Calu3 (cell line): ENCODE measurements at regions of chr3 and their contacts with region 1.

Region 1: DNA sequence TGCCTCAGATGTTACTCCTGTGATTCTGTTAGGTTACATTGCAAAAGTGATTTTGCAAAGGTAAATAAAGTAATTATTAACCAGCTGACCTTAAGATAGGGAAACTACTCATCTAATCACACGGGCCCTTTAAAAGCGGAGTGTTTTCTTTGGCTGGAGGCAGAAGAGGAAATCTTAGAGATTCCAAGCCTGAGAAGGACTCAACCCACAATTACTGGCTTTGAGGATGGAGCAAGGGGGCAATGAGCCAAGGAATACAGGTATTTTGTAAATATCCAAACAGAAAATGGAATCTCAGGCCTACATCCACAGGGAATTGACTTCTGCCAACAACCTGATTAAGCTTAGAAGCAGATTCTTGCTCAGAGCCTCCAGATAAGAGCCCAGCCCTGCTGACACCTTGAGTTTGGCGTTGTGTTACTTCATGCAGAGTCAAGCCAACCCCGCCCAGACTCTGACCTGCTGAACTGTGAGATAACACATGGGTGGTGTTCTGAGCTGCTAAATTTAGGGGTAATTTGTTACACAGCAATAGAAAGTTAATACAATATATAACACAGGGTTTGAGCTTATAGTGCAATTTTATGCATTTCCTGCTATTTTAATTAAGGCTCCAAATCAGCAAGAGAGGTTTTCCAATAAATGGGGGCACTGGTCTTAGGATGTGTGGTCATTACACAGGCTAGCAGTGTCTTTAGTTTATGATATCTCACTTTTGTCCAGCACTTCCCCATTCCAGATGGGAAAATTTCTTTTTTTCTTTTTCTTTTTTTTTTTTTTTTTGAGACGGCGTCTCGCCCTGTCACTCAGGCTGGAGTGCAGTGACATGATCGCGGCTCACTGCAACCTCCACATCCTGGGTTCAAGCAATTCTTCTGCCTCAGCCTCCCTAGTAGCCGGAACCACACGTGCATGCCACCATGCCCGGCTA is 19.5 kb downstream of the NFKBIZ start:
- DNase-seq: peak; percentile 50
- H3K4me3 Mint-ChIP-seq: peak overlapping the region; percentile 28
- H3K27ac Mint-ChIP-seq: peak overlapping the region; percentile 95
- H3K4me1 Mint-ChIP-seq: peaks cover 51% of the 10 kb centered on the region
- H3K27me3 Mint-ChIP-seq: no peaks in the 10 kb centered on the region
- CTCF ChIP-seq: no peak

Region 2: DNA sequence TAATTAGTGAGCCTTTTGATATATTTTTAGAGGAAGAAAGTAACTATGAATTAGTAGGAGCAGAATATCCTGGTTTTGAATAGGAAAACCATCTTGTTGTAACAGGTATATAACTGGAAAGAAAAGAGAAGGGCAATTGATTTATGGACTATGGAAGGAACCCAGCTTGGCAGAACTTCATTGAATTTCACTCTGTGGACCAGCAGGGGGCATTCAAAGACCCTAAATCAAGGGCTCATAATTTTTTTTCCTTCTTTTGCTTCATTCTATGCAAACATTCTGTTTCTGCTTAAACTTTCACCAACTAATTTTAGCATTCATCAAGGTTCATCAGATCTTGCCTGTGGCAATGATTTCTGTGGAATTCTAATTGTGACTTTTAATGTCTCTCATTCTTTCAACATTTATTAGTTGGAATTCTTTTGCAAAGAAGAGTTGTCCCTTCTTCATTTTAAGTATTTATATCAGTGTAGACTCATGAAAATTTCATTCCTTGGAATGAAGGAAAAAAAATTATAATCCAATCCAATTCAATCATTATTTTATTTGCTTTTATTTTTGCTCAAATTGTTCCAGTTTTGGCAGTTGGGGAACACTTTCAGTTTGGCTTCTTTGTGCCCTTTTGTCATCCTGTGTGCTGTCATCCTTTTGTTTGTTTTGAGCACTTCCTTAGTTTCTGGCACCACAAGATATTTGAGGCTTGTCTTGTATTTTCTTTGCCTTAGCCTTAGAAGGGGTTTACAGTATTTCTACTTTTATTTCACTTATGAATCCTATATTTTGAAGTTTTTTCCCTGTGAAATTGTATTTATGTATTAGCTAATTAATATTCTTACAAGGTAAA is 59.4 kb before region 1 on chr3:
- CTCF ChIA-PET with region 1: no interaction called
- intact Hi-C with region 1: loop called (anchors 5 kb)
- DNase-seq: peak; percentile 34
- H3K4me3 Mint-ChIP-seq: no peak overlapping the region
- H3K27ac Mint-ChIP-seq: no peak overlapping the region
- H3K4me1 Mint-ChIP-seq: no peaks in the 10 kb centered on the region
- H3K27me3 Mint-ChIP-seq: no peaks in the 10 kb centered on the region
- CTCF ChIP-seq: peak; percentile 47

Region 3: GRCh38 chr3:101936419-101937356 is 67.9 kb after region 1 on chr3:
- CTCF ChIA-PET with region 1: no interaction called
- intact Hi-C with region 1: loop called (anchors 5 kb)
- DNase-seq: no peak
- H3K4me3 Mint-ChIP-seq: no peak overlapping the region
- H3K27ac Mint-ChIP-seq: peak overlapping the region; percentile 87
- H3K4me1 Mint-ChIP-seq: peaks cover 24% of the 10 kb centered on the region
- H3K27me3 Mint-ChIP-seq: no peaks in the 10 kb centered on the region
- CTCF ChIP-seq: no peak